Calu3 (cell line): ENCODE measurements at regions of chr2 and their contacts with region 1.

Region 1: DNA sequence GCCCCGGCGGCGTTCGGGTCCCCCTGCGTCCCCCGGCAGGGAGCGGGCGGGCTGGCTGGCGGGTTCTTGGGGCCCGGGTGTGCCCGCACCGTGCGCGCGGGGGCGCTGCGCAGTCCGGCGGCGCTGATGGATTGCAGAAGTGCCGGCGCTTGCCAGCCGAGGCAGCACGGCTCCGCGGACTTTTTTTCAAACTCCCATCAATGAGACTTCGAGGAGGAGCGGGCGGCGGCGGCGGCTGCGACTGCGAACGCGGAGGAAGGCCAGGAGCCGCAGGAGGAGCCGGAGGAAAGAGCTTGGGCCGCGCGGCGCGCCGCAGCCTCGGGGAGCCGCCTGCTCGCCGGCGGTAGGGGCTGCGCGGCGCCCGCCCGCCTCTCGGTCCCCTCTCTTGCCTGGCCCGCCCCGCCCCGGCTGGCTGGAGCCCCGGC is at the start of gene GLI2:
- DNase-seq: peak; percentile 84
- H3K4me3 Mint-ChIP-seq: peak within 1 kb of the TSS; percentile 87
- H3K27ac Mint-ChIP-seq: no peak within 1 kb of the TSS
- H3K4me1 Mint-ChIP-seq: peaks cover 10% of the 10 kb centered on the region
- H3K27me3 Mint-ChIP-seq: peaks cover 64% of the 10 kb centered on the region
- CTCF ChIP-seq: peak; percentile 82
- total RNA-seq, gene GLI2: 1.4 and 1.6 TPM in 2 replicates

Region 2: DNA sequence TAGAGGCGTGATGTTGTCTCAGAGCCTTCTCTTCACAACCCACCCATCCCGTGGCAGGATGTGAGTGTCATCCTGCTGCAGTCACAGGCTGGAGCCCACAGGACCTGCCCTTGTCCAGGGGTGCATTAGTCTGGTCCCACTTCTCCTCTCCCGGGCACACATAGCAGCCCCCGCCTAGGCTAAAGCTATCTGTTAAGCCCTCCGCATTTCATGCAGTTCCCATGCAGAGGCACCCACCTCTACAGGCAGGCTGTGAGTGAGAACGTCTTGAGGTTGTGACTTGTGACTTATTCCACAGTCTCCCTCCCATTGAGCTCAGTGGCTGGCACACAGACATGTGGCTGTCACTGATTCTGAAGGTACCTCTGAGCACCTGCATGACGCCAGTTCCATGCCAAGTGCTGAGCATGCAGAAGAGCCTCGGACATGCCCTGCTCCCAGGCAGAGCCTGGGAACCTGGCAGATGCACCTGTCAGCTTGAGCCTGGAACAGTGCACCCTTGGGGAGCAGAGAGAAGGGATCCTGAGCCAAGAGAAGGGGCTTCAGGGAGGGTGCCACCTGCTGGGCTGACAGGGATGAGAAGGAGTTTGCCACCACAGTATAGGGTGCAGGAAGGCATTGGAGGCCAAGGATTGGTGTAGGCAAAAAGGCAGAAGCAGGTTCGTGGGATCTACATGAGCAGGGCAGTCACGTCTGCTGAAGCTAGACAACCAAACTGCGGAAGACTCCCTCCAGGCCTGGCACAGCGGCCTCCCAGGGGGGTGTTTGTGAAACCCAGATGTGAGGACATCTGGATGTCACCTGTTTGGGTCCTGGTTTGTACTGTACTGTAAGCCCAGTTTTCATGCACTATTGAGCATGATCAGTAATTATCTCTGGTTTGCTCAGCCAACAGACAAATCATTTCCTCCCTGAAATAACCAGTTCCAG is 213.5 kb after region 1 on chr2:
- CTCF ChIA-PET with region 1: interaction called, 7 read pairs
- intact Hi-C with region 1: loop called (anchors 5 kb)
- DNase-seq: peak; percentile 67
- H3K4me3 Mint-ChIP-seq: no peak overlapping the region
- H3K27ac Mint-ChIP-seq: no peak overlapping the region
- H3K4me1 Mint-ChIP-seq: peaks cover 24% of the 10 kb centered on the region
- H3K27me3 Mint-ChIP-seq: no peaks in the 10 kb centered on the region
- CTCF ChIP-seq: peak; percentile 41